Tibial artery (tissue), 4 donors: ENCODE measurements at regions of chr6 and their contacts with region 1.

Region 1: GRCh38 chr6:56955171-56956045 is 501 bp downstream of the BEND6 start:
- DNase-seq: peak; percentile 69 to 87
- H3K4me3 ChIP-seq: peak overlapping the region; percentile 61 to 78
- H3K27ac ChIP-seq: peak overlapping the region; percentile 49 to 54
- H3K4me1 ChIP-seq: peaks cover 0 to 20% (median 6%) of the 10 kb centered on the region in 4 donors
- H3K27me3 ChIP-seq: no peaks in the 10 kb centered on the region
- CTCF ChIP-seq: peak; percentile 37 to 54

Region 2: GRCh38 chr6:56868687-56869086 is 86.7 kb before region 1 on chr6:
- intact Hi-C with region 1: no loop called
- DNase-seq: no peak
- H3K4me3 ChIP-seq: no peak overlapping the region
- H3K27ac ChIP-seq: no peak overlapping the region
- H3K4me1 ChIP-seq: peaks cover 0 to 20% (median 2%) of the 10 kb centered on the region in 4 donors
- H3K27me3 ChIP-seq: no peaks in the 10 kb centered on the region
- CTCF ChIP-seq: no peak

Region 3: GRCh38 chr6:56902641-56903464 is 52.6 kb before region 1 on chr6:
- intact Hi-C with region 1: loop called (anchors 10 kb)
- DNase-seq: no peak
- H3K4me3 ChIP-seq: no peak overlapping the region
- H3K27ac ChIP-seq: no peak overlapping the region
- H3K4me1 ChIP-seq: peaks cover 0 to 7% (median 0%) of the 10 kb centered on the region in 4 donors
- H3K27me3 ChIP-seq: no peaks in the 10 kb centered on the region
- CTCF ChIP-seq: peak; percentile 54 to 74

Region 4: GRCh38 chr6:57021086-57021720 is 65.8 kb after region 1 on chr6:
- intact Hi-C with region 1: loop called (anchors 10 kb)
- DNase-seq: no peak
- H3K4me3 ChIP-seq: no peak overlapping the region
- H3K27ac ChIP-seq: no peak overlapping the region
- H3K4me1 ChIP-seq: no peaks in the 10 kb centered on the region
- H3K27me3 ChIP-seq: no peaks in the 10 kb centered on the region
- CTCF ChIP-seq: peak; percentile 55 to 60

Region 5: DNA sequence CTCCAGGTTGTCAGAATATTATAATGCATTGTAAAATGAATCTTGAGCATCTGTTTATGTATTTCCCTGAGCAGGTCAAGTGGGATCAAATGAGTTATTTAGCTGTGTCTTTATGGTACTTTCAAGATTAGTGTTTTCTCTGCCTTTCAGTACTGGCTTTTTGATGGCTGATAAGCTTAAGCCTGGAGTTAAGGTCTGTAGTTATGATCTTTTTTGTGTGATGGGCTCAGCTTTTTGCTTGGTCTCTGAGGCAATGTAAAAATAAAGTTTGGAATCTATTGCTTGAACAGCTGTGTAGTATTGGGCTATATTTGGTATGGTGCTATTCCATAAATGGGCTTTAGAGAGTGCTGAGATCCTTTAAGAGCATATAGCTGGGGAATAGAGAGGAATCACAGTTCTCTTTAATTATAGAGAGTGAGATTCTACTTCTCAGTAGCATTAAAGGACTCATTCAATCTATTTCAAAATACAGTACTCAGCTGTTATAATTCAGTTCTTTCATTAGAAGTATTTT is 175.3 kb after region 1 on chr6:
- intact Hi-C with region 1: no loop called
- DNase-seq: no peak
- H3K4me3 ChIP-seq: no peak overlapping the region
- H3K27ac ChIP-seq: no peak overlapping the region
- H3K4me1 ChIP-seq: peaks cover 0 to 14% (median 5%) of the 10 kb centered on the region in 4 donors
- H3K27me3 ChIP-seq: no peaks in the 10 kb centered on the region
- CTCF ChIP-seq: no peak

Region 6: GRCh38 chr6:57324538-57324937 is 369.1 kb after region 1 on chr6:
- intact Hi-C with region 1: loop called (anchors 5 kb)
- DNase-seq: no peak
- H3K4me3 ChIP-seq: no peak overlapping the region
- H3K27ac ChIP-seq: no peak overlapping the region
- H3K4me1 ChIP-seq: no peaks in the 10 kb centered on the region
- H3K27me3 ChIP-seq: no peaks in the 10 kb centered on the region
- CTCF ChIP-seq: peak; percentile 41 to 43